B cell (primary cell): ENCODE measurements at regions of chr1 and their contacts with region 1.

Region 1: GRCh38 chr1:26336477-26337205 is 17.3 kb downstream of the CRYBG2 start:
- DNase-seq: peak; percentile 91
- ATAC-seq: peak; percentile 96
- H3K4me3 ChIP-seq: peak overlapping the region in 4 of 5 experiments; percentile 56 to 72 (median 65)
- H3K4me3 Mint-ChIP-seq: peak overlapping the region; percentile 95
- H3K27ac ChIP-seq: no peak overlapping the region
- H3K27ac Mint-ChIP-seq: peak overlapping the region; percentile 61
- H3K4me1 ChIP-seq: peaks cover 8 to 14% of the 10 kb centered on the region in 2 donors
- H3K4me1 Mint-ChIP-seq: peaks cover 13% of the 10 kb centered on the region
- H3K27me3 ChIP-seq: no peaks in the 10 kb centered on the region
- H3K27me3 Mint-ChIP-seq: no peaks in the 10 kb centered on the region
- CTCF ChIP-seq: no peak

Region 2: GRCh38 chr1:26358411-26359384 is 22.1 kb after region 1 on chr1:
- CTCF ChIA-PET with region 1: interaction called, 6 read pairs
- POLR2A ChIA-PET with region 1: no interaction called
- intact Hi-C with region 1: loop called (anchors 1 kb)
- DNase-seq: no peak
- ATAC-seq: no peak
- H3K4me3 ChIP-seq: no peak overlapping the region
- H3K4me3 Mint-ChIP-seq: peak overlapping the region; percentile 29
- H3K27ac ChIP-seq: no peak overlapping the region
- H3K27ac Mint-ChIP-seq: no peak overlapping the region
- H3K4me1 ChIP-seq: peaks cover 22% of the 10 kb centered on the region in 2 donors
- H3K4me1 Mint-ChIP-seq: peaks cover 29% of the 10 kb centered on the region
- H3K27me3 ChIP-seq: peaks cover 0 to 34% (median 10%) of the 10 kb centered on the region in 4 experiments
- H3K27me3 Mint-ChIP-seq: peaks cover 26% of the 10 kb centered on the region
- CTCF ChIP-seq: no peak

Region 3: DNA sequence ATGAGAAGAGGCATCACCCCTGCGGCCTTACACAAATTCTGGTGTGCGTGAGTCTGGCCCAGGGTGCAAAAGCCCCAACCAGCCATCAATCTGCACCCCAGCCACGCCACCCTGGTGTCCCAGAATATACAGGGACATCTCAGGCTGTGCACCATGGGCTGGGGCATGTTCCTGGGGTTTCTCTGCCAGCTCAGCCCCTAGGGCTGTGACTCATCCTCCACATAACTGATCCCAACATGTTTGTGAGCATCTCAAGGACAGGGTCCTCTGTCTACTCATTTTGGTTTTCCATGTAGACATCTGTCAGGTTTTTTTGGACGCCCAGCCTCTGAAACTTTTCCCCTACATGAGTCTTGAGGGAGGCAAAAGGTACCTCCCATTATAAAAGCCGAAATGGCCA is 35.4 kb after region 1 on chr1:
- CTCF ChIA-PET with region 1: no interaction called
- POLR2A ChIA-PET with region 1: no interaction called
- intact Hi-C with region 1: no loop called
- DNase-seq: no peak
- ATAC-seq: no peak
- H3K4me3 ChIP-seq: no peak overlapping the region
- H3K4me3 Mint-ChIP-seq: no peak overlapping the region
- H3K27ac ChIP-seq: no peak overlapping the region
- H3K27ac Mint-ChIP-seq: no peak overlapping the region
- H3K4me1 ChIP-seq: peaks cover 9 to 36% of the 10 kb centered on the region in 2 donors
- H3K4me1 Mint-ChIP-seq: peaks cover 30% of the 10 kb centered on the region
- H3K27me3 ChIP-seq: no peaks in the 10 kb centered on the region
- H3K27me3 Mint-ChIP-seq: peaks cover 5% of the 10 kb centered on the region
- CTCF ChIP-seq: no peak